Breast epithelium (tissue), 4 donors: ENCODE measurements at regions of chr1 and their contacts with region 1.

Region 1: DNA sequence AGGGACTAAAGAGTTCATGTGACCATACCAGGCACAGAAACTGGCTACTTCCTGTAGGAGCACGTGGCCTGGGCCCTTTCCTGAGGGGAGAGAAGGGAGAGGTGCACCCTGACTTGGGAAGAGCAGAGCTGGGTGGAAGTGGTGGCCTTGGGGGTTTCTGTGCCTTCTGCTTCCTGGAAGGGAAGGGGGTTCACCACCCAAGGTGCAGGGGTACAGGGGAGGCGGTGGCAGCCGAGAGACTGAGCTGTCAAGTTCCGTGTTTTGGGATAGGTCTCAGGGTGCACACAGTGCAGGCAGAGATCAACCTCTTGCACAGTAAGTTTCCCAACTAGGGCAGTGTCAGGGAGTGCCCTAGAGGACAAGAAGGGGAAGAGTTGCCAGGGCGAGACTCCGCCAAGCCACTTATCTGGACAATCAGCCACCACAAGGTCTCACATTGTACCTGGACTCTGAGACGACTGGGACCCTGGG is 10.1 kb downstream of the HECTD3 start:
- DNase-seq: peak; percentile 58 to 77
- H3K4me3 ChIP-seq: no peak overlapping the region
- H3K27ac ChIP-seq: peak overlapping the region; percentile 71 to 78
- H3K4me1 ChIP-seq: no peaks in the 10 kb centered on the region
- H3K27me3 ChIP-seq: no peaks in the 10 kb centered on the region
- CTCF ChIP-seq: peak in 1 of 3 donors; percentile 13
- POLR2A ChIP-seq: no peak

Region 2: DNA sequence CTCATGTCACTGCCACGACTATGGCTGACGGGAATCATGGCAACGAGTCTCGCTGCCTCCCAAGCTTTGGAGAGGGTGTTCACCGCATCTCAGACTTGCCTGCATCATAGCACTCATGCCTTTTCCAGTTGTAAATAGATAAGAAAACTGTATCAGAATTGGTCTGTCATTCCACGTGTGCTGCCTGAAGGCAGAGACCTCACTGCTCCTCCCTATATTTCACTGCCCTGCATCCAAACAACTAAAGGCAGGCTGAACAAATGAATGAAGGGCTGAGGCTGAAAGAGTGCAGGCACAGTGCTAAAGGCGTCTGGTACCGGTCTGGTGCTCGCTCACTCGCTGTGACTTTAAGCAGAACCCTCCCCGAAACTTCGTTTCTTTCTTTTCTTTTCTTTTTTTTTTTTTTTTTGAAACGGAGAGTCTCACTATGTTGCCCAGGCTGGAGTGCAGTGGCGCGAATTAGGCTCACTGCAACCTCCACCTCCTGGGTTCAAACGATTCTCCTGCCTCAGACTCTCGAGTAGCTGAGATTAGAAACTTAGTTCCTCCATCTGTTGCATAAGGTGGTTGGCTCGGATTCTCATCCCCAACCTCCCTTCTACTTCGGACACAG is 15.2 kb before region 1 on chr1:
- intact Hi-C with region 1: no loop called
- DNase-seq: no peak
- H3K4me3 ChIP-seq: peak overlapping the region; percentile 52 to 80 (median 79)
- H3K27ac ChIP-seq: peak overlapping the region; percentile 41 to 62
- H3K4me1 ChIP-seq: peaks cover 5 to 9% of the 10 kb centered on the region in 2 donors
- H3K27me3 ChIP-seq: no peaks in the 10 kb centered on the region
- CTCF ChIP-seq: no peak
- POLR2A ChIP-seq: no peak

Region 3: GRCh38 chr1:46512135-46512791 is 1511.2 kb after region 1 on chr1:
- intact Hi-C with region 1: loop called (anchors 5 kb)
- DNase-seq: no peak
- H3K4me3 ChIP-seq: no peak overlapping the region
- H3K27ac ChIP-seq: no peak overlapping the region
- H3K4me1 ChIP-seq: no peaks in the 10 kb centered on the region
- H3K27me3 ChIP-seq: no peaks in the 10 kb centered on the region
- CTCF ChIP-seq: no peak
- POLR2A ChIP-seq: no peak